ENCODE measurements at regions of chr9 and their contacts with region 1.

Region 1: DNA sequence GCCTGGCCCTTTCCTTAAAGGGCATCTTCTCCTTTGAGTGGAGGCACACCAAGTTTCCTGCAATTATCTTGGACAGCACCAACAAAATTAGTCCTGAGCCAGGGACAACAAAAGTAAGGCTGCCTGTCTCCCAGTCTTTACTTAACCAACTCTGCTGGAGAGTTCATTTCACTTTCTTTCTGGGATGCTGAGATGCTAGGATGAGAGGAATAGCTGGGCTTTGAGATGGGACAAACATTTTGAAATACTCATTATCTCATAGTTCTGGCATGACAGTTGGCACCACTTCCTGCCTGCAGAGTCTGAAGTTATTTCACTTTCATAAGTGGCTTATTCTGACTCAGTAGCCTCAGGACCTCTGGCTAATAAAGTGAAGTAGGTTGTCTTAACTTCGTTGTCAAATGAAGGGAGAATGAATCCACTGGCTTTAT is 157.0 kb downstream of the C9orf152 start:
- DNase-seq: peak; percentile 91
- H3K4me3 ChIP-seq: peak overlapping the region in 2 of 3 experiments; percentile 18 to 19
- H3K27ac ChIP-seq: peak overlapping the region; percentile 53
- H3K4me1 ChIP-seq: peaks cover 22% of the 10 kb centered on the region
- H3K27me3 ChIP-seq: no peaks in the 10 kb centered on the region
- CTCF ChIP-seq: no peak

Region 2: GRCh38 chr9:109986521-109986991 is 64.4 kb before region 1 on chr9:
- CTCF ChIA-PET with region 1: no interaction called
- dilution Hi-C with region 1: no loop called
- in situ Hi-C with region 1: no loop called
- intact Hi-C with region 1: loop called (anchors 1 kb)
- DNase-seq: peak; percentile 73
- H3K4me3 ChIP-seq: no peak overlapping the region
- H3K27ac ChIP-seq: peak overlapping the region; percentile 56
- H3K4me1 ChIP-seq: peaks cover 9% of the 10 kb centered on the region
- H3K27me3 ChIP-seq: no peaks in the 10 kb centered on the region
- CTCF ChIP-seq: no peak

Region 3: DNA sequence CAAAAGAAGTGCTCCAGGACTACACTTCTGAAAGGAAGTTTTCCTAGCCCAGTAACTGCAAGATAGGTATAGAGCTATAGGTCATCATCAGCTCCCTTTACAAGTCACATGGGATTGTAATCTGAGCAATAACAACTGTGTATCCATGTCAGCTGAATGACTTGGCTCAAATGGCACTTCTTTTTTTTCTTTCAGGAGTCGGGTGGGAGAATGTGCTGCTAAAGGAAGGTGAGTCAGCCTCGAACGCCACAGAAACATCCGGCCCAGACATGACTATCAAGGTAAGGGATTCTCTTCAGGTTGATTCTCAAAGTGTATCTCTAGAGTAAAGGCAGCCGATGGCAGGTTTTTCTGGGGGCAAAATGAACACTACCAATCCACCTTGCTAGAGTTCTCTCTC is 35.2 kb before region 1 on chr9:
- CTCF ChIA-PET with region 1: no interaction called
- dilution Hi-C with region 1: no loop called
- in situ Hi-C with region 1: no loop called
- intact Hi-C with region 1: loop called (anchors 5 kb)
- DNase-seq: peak; percentile 91
- H3K4me3 ChIP-seq: no peak overlapping the region
- H3K27ac ChIP-seq: peak overlapping the region; percentile 74
- H3K4me1 ChIP-seq: peaks cover 15% of the 10 kb centered on the region
- H3K27me3 ChIP-seq: no peaks in the 10 kb centered on the region
- CTCF ChIP-seq: no peak

Region 4: GRCh38 chr9:110029429-110029955 is 21.4 kb before region 1 on chr9:
- CTCF ChIA-PET with region 1: no interaction called
- dilution Hi-C with region 1: no loop called
- in situ Hi-C with region 1: no loop called
- intact Hi-C with region 1: loop called (anchors 1 kb)
- DNase-seq: peak; percentile 80
- H3K4me3 ChIP-seq: no peak overlapping the region
- H3K27ac ChIP-seq: peak overlapping the region; percentile 43
- H3K4me1 ChIP-seq: peaks cover 44% of the 10 kb centered on the region
- H3K27me3 ChIP-seq: no peaks in the 10 kb centered on the region
- CTCF ChIP-seq: no peak

Region 5: DNA sequence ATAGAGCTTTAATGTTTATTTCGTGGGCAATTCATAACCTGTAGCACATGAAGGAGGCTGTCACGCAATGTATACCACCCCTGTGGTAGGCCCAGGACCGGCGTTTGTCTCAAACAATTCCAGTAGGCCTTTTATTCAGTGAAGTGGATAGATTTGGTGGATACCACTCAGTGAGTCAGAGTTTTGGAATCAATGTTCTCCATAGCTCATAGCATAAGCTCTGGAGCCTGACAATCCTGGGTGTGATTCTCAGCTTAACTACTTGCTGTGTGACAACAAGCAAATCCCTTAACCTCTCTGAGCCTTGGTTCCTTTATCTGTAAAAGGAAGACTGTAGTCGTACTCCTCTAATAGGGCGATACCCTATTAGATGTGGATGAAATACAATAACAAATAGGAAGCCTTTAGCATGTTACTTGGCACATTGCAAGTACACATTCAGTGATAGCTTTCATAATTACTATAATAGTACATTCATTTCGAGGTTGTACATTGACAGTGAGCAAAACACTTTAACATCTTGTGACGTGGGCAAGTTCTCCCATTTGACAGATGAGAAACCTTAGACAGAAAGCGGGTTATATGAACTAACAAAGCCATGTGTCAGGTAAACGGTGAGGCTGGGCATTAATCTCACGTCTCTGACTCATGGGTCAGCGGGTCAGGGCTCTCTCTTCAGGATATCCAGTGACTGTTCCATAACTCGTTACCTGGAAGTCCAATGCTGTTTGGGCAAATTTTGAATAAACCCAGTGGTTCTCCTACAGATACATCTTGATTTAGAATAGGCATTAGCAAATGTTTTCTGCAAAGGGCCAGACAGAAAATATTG is 26.2 kb after region 1 on chr9:
- CTCF ChIA-PET with region 1: no interaction called
- dilution Hi-C with region 1: no loop called
- in situ Hi-C with region 1: no loop called
- intact Hi-C with region 1: no loop called
- DNase-seq: peak; percentile 47
- H3K4me3 ChIP-seq: no peak overlapping the region
- H3K27ac ChIP-seq: no peak overlapping the region
- H3K4me1 ChIP-seq: peaks cover 13% of the 10 kb centered on the region
- H3K27me3 ChIP-seq: no peaks in the 10 kb centered on the region
- CTCF ChIP-seq: no peak